Colonic mucosa (tissue), 4 donors: ENCODE measurements at regions of chr7 and their contacts with region 1.

Region 1: GRCh38 chr7:100469227-100470044 is 5.4 kb upstream of the SPACDR start:
- DNase-seq: peak; percentile 89
- H3K4me3 ChIP-seq: no peak overlapping the region
- H3K27ac ChIP-seq: no peak overlapping the region
- H3K4me1 ChIP-seq: peaks cover 10% of the 10 kb centered on the region
- H3K27me3 ChIP-seq: no peaks in the 10 kb centered on the region
- CTCF ChIP-seq: peak; percentile 89

Region 2: GRCh38 chr7:100563809-100564400 is 94.5 kb after region 1 on chr7:
- intact Hi-C with region 1: loop called (anchors 2 kb)
- DNase-seq: peak; percentile 90
- H3K4me3 ChIP-seq: no peak overlapping the region
- H3K27ac ChIP-seq: no peak overlapping the region
- H3K4me1 ChIP-seq: no peaks in the 10 kb centered on the region
- H3K27me3 ChIP-seq: no peaks in the 10 kb centered on the region
- CTCF ChIP-seq: peak; percentile 95